Tibial artery (tissue), 4 donors: ENCODE measurements at regions of chr21 and their contacts with region 1.

Region 1: GRCh38 chr21:31781737-31782136 is 49.8 kb upstream of the SCAF4 start:
- DNase-seq: peak in 1 of 2 donors; percentile 73
- H3K4me3 ChIP-seq: no peak overlapping the region
- H3K27ac ChIP-seq: no peak overlapping the region
- H3K4me1 ChIP-seq: no peaks in the 10 kb centered on the region
- H3K27me3 ChIP-seq: no peaks in the 10 kb centered on the region
- CTCF ChIP-seq: no peak

Region 2: DNA sequence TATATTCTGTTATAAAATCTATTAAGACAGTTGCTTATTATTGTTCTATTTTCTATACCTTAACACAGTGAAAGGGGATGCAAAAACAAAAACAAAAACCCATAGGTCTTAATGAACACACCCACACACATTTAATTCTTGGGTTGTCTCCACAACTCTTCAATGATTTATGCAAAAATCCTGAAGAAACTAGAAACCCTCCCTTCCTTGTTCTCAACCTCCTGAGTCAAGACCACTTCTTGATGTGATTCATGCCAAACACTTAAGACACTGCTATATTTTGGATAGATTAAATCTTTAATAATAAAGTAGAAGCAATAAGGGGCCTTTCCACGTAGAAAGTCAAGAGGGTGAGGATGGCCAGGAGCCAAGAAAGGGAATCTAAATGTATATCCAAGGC is 73.2 kb before region 1 on chr21:
- intact Hi-C with region 1: loop called (anchors 2 kb)
- DNase-seq: no peak
- H3K4me3 ChIP-seq: no peak overlapping the region
- H3K27ac ChIP-seq: no peak overlapping the region
- H3K4me1 ChIP-seq: peaks cover 0 to 68% (median 17%) of the 10 kb centered on the region in 4 donors
- H3K27me3 ChIP-seq: no peaks in the 10 kb centered on the region
- CTCF ChIP-seq: no peak

Region 3: GRCh38 chr21:31830701-31831100 is 49.0 kb after region 1 on chr21:
- intact Hi-C with region 1: no loop called
- DNase-seq: no peak
- H3K4me3 ChIP-seq: no peak overlapping the region
- H3K27ac ChIP-seq: no peak overlapping the region
- H3K4me1 ChIP-seq: no peaks in the 10 kb centered on the region
- H3K27me3 ChIP-seq: no peaks in the 10 kb centered on the region
- CTCF ChIP-seq: no peak